GM12878 (cell line): ENCODE measurements at regions of chr10 and their contacts with region 1.

Region 1: GRCh38 chr10:27319752-27320561 is 79.4 kb upstream of the ACBD5 start:
- DNase-seq: no peak
- ATAC-seq: peak; percentile 71
- H3K4me3 ChIP-seq: no peak overlapping the region
- H3K27ac ChIP-seq: no peak overlapping the region
- H3K4me1 ChIP-seq: peaks cover 4% of the 10 kb centered on the region
- H3K27me3 ChIP-seq: no peaks in the 10 kb centered on the region
- CTCF ChIP-seq: no peak
- EP300 ChIP-seq: no peak
- POLR2A ChIP-seq: no peak
- RAD21 ChIP-seq: no peak

Region 2: DNA sequence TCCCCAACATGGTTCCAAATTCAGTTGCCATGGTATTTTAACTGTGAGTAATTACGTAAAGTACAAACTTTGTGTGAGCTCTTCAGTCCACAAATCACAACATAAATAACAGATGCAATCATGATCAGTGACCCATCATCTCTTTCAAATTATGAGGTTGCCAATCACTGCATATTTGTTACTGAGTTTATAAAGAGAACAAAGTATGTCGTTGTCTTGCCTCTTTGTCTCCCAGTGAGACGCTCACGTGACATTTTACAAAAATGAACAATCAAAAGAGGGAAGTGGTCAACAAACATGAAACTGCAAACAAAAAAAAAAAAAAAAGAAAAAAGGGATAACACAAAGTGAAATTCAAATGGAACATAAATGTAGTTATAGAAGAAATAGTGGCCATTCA is 745.2 kb before region 1 on chr10:
- CTCF ChIA-PET with region 1: no interaction called
- POLR2A ChIA-PET with region 1: no interaction called
- RAD21 ChIA-PET with region 1: no interaction called
- SMC1A ChIA-PET with region 1: no interaction called
- in situ Hi-C with region 1: loop called (anchors 5 kb)
- intact Hi-C with region 1: loop called (anchors 5 kb)
- DNase-seq: peak; percentile 67
- ATAC-seq: peak; percentile 87
- H3K4me3 ChIP-seq: no peak overlapping the region
- H3K27ac ChIP-seq: 0 out of 2 replicates have a peak overlapping the region, but pooled peaks have one; percentile 18
- H3K4me1 ChIP-seq: peaks cover 7% of the 10 kb centered on the region; the same call in 1 of the 2 replicates
- H3K27me3 ChIP-seq: no peaks in the 10 kb centered on the region
- CTCF ChIP-seq: no peak
- EP300 ChIP-seq: peak; percentile 68 to 88; a peak in 3 of 4 replicates
- POLR2A ChIP-seq: no peak
- RAD21 ChIP-seq: no peak

Region 3: DNA sequence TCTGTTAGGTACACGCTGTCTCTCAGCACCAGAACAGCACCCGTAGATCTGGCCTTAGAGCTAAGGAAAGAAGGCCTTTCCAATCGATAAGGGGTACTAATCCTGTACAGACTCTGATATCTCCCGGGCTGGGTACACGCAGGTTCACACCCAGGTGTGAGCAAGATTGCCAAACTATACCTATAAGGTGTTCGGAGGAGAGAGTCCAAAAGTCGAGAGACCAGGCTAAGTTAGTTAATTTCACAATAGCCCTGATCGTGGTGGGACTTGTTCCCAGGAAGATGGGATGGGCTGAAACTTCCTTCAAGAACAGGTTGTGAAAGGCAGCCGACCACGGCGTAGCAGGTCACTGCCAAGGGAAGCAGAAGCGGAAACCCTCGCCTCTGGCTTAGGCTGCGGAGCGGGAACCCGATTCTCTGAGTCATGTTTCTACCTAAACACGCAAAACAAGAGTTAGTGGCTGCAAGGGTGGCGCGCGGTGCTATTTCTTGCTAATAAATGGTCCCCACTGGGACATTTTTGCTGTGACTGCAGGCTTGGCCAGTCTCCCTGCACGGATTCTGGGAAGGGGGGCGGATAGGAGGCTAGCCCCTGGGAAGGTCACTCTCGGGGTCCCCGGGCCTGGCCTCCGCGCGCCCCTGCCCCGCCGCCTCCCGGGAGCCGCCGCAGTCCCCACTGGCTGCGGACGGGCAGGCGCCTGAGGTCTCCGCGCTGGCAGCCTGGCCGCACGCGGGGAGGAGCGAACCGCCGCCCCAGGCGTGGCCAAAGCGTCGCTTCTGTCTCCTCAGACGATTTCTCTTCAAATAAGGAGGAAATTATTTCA is 697.9 kb before region 1 on chr10:
- CTCF ChIA-PET with region 1: no interaction called
- POLR2A ChIA-PET with region 1: no interaction called
- RAD21 ChIA-PET with region 1: no interaction called
- SMC1A ChIA-PET with region 1: no interaction called
- in situ Hi-C with region 1: loop called (anchors 10 kb)
- intact Hi-C with region 1: loop called (anchors 5 kb)
- DNase-seq: no peak
- ATAC-seq: peak; percentile 85
- H3K4me3 ChIP-seq: peak overlapping the region; percentile 49; the same call in 1 of the 2 replicates
- H3K27ac ChIP-seq: no peak overlapping the region
- H3K4me1 ChIP-seq: peaks cover 5% of the 10 kb centered on the region
- H3K27me3 ChIP-seq: peaks cover 0 to 7% of the 10 kb centered on the region in 2 experiments; a peak in 2 of 4 replicates
- CTCF ChIP-seq: no peak
- EP300 ChIP-seq: no peak
- POLR2A ChIP-seq: no peak
- RAD21 ChIP-seq: no peak

Region 4: GRCh38 chr10:26627324-26627723 is 692.6 kb before region 1 on chr10:
- CTCF ChIA-PET with region 1: no interaction called
- POLR2A ChIA-PET with region 1: no interaction called
- RAD21 ChIA-PET with region 1: no interaction called
- SMC1A ChIA-PET with region 1: no interaction called
- in situ Hi-C with region 1: loop called (anchors 10 kb)
- intact Hi-C with region 1: loop called (anchors 5 kb)
- DNase-seq: no peak
- ATAC-seq: peak; percentile 56; the same call in 2 of the 3 replicates
- H3K4me3 ChIP-seq: no peak overlapping the region
- H3K27ac ChIP-seq: no peak overlapping the region
- H3K4me1 ChIP-seq: peaks cover 1% of the 10 kb centered on the region
- H3K27me3 ChIP-seq: peaks cover 0 to 3% of the 10 kb centered on the region in 2 experiments; a peak in 2 of 4 replicates
- CTCF ChIP-seq: no peak
- EP300 ChIP-seq: no peak
- POLR2A ChIP-seq: no peak
- RAD21 ChIP-seq: no peak